K562 (cell line): ENCODE measurements at regions of chr3 and their contacts with region 1.

Region 1: DNA sequence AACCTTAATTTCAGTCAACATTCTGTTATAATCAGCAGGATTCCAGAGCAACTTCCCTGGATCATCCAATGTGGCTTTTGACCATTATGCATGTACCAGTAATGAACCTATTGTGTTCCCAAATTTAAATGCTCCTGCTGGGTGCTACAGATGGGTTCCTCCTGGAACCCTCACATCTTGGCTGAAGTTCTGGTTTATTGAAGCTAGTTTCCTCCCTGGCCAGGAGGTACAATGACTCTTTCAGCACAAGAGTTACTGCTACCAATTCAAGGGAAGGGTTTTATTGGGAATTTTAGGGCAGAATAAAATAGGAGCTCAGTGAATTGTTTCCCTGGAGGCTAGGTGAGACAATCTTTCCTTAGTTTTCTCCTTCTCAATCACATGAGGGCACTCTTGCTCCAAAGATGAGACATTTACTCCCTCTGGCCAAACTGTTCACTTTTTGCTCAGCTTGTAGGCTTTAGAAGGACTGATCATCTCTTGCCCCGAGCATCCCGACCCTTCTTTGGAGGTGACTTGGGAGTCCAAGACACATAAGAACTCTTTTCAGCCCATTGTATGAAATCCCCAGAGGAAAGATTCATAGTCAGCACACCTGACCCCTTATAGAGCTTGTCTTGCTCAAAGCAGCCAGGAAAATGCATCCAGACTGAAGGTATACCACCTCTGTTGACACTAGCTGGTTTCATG is 8.8 kb upstream of the NPHP3 start:
- DNase-seq: peak in 2 of 4 experiments; percentile 22 to 49
- ATAC-seq: peak; percentile 87
- H3K4me3 ChIP-seq: no peak overlapping the region
- H3K27ac ChIP-seq: no peak overlapping the region
- H3K4me1 ChIP-seq: no peaks in the 10 kb centered on the region
- H3K27me3 ChIP-seq: no peaks in the 10 kb centered on the region
- CTCF ChIP-seq: peak; percentile 54 to 71 (median 55); a peak in 5 of 6 replicates
- EP300 ChIP-seq: no peak
- POLR2A ChIP-seq: no peak
- RAD21 ChIP-seq: peak; percentile 71 to 81

Region 2: DNA sequence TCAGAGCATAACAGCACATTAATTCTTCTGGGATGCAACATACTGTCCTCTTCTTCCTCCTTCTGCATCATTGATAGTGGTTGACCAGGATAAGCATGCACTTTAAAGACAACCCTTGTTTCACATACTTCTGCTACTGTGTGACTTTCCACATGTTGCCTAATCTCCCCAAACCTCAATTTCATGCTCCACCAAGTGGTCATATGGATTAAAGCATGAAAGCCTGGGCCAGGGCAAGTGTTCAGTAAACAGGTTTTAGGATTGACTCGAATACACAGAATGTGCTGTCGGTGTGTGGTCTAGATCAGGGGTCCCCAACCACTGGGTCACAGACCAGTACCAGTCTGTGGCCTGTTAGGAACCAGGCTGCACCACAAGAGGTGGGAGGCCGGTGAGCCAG is 646.4 kb after region 1 on chr3:
- CTCF ChIA-PET with region 1: interaction called, 10 read pairs
- POLR2A ChIA-PET with region 1: no interaction called
- in situ Hi-C with region 1: loop called (anchors 10 kb)
- intact Hi-C with region 1: no loop called
- DNase-seq: peak in 2 of 4 experiments; percentile 18 to 24
- ATAC-seq: peak; percentile 71
- H3K4me3 ChIP-seq: no peak overlapping the region
- H3K27ac ChIP-seq: no peak overlapping the region
- H3K4me1 ChIP-seq: no peaks in the 10 kb centered on the region; a peak in 2 of 5 replicates
- H3K27me3 ChIP-seq: no peaks in the 10 kb centered on the region; a peak in 1 of 5 replicates
- CTCF ChIP-seq: peak; percentile 30 to 53 (median 34); a peak in 3 of 6 replicates
- EP300 ChIP-seq: no peak
- POLR2A ChIP-seq: no peak
- RAD21 ChIP-seq: peak; percentile 44 to 57

Region 3: GRCh38 chr3:133384331-133385027 is 653.4 kb after region 1 on chr3:
- CTCF ChIA-PET with region 1: interaction called, 8 read pairs
- POLR2A ChIA-PET with region 1: no interaction called
- in situ Hi-C with region 1: loop called (anchors 10 kb)
- intact Hi-C with region 1: loop called (anchors 2 kb)
- DNase-seq: peak; percentile 29 to 41 (median 33)
- ATAC-seq: peak; percentile 93
- H3K4me3 ChIP-seq: no peak overlapping the region
- H3K27ac ChIP-seq: no peak overlapping the region
- H3K4me1 ChIP-seq: no peaks in the 10 kb centered on the region; a peak in 1 of 5 replicates
- H3K27me3 ChIP-seq: no peaks in the 10 kb centered on the region
- CTCF ChIP-seq: peak; percentile 58 to 68 (median 66)
- EP300 ChIP-seq: no peak
- POLR2A ChIP-seq: no peak
- RAD21 ChIP-seq: peak; percentile 63 to 75

Region 4: GRCh38 chr3:133426721-133427120 is 695.7 kb after region 1 on chr3:
- CTCF ChIA-PET with region 1: interaction called, 9 read pairs
- POLR2A ChIA-PET with region 1: no interaction called
- in situ Hi-C with region 1: loop called (anchors 10 kb)
- intact Hi-C with region 1: loop called (anchors 1 kb)
- DNase-seq: no peak
- ATAC-seq: no peak
- H3K4me3 ChIP-seq: no peak overlapping the region
- H3K27ac ChIP-seq: no peak overlapping the region
- H3K4me1 ChIP-seq: no peaks in the 10 kb centered on the region
- H3K27me3 ChIP-seq: peaks cover 0 to 4% of the 10 kb centered on the region in 2 experiments; a peak in 2 of 5 replicates
- CTCF ChIP-seq: no peak
- EP300 ChIP-seq: no peak
- POLR2A ChIP-seq: no peak
- RAD21 ChIP-seq: no peak

Region 5: GRCh38 chr3:133805527-133806475 is 1074.8 kb after region 1 on chr3 and contains the start of gene SRPRB:
- CTCF ChIA-PET with region 1: no interaction called
- POLR2A ChIA-PET with region 1: no interaction called
- in situ Hi-C with region 1: loop called (anchors 25 kb)
- intact Hi-C with region 1: no loop called
- DNase-seq: peak; percentile 90 to 94 (median 92)
- ATAC-seq: peak; percentile 99
- H3K4me3 ChIP-seq: peak within 1 kb of the TSS; percentile 89
- H3K27ac ChIP-seq: peak within 1 kb of the TSS; percentile 80
- H3K4me1 ChIP-seq: no peaks in the 10 kb centered on the region; a peak in 1 of 5 replicates
- H3K27me3 ChIP-seq: no peaks in the 10 kb centered on the region
- CTCF ChIP-seq: no peak
- EP300 ChIP-seq: no peak
- POLR2A ChIP-seq: peak; percentile 92
- RAD21 ChIP-seq: no peak
- polyA plus RNA-seq, gene SRPRB: 29.5 to 37.5 TPM